PC-9 (cell line): ENCODE measurements at regions of chr6 and their contacts with region 1.

Region 1: GRCh38 chr6:83480470-83480869 is 31.9 kb upstream of the PRSS35 start:
- DNase-seq: no peak
- H3K4me3 ChIP-seq: no peak overlapping the region
- H3K27ac ChIP-seq: no peak overlapping the region
- H3K4me1 ChIP-seq: no peaks in the 10 kb centered on the region
- H3K27me3 ChIP-seq: no peaks in the 10 kb centered on the region
- CTCF ChIP-seq: no peak

Region 2: DNA sequence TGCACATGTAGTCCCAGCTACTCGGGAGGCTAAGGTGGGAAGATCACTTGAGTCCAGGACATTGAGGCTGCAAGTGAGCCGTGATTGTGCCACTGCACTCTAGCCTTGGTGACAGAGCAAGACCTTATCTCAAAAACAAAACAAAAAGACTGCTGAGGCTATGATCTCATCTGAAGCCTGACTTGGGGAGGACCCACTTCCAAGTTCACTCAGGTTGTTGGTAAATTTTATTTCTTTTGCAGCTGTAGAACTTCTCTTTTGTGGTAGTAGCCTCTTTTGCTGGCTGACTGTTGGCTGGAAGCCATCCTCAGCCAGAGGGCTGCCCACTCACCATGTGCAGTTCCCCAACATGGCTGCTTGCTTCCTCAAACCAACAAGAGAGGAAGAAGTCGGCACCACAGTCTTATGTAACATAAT is 12.8 kb before region 1 on chr6:
- CTCF ChIA-PET with region 1: no interaction called
- POLR2A ChIA-PET with region 1: interaction called, 10 read pairs
- intact Hi-C with region 1: no loop called
- DNase-seq: no peak
- H3K4me3 ChIP-seq: no peak overlapping the region
- H3K27ac ChIP-seq: no peak overlapping the region
- H3K4me1 ChIP-seq: no peaks in the 10 kb centered on the region
- H3K27me3 ChIP-seq: no peaks in the 10 kb centered on the region
- CTCF ChIP-seq: no peak

Region 3: DNA sequence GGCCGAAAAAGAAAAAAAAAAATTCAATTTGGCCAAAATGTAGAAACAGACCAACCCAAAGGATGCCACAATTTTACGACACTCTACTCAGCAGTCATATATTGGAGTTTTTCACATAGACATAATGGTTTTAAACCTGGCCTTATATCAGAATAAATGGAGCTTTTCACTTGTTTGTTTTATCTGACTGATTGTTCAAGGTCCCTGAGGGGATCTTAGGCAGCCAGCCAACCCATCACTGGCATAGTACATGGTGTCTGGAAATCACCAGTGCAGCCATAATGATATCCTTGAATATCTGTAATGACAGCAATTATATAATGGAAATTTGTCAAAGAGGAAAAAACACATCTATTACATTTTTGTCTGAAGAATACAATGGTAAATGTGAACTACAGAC is 128.8 kb after region 1 on chr6:
- CTCF ChIA-PET with region 1: no interaction called
- POLR2A ChIA-PET with region 1: no interaction called
- intact Hi-C with region 1: no loop called
- DNase-seq: no peak
- H3K4me3 ChIP-seq: no peak overlapping the region
- H3K27ac ChIP-seq: no peak overlapping the region
- H3K4me1 ChIP-seq: no peaks in the 10 kb centered on the region
- H3K27me3 ChIP-seq: no peaks in the 10 kb centered on the region
- CTCF ChIP-seq: no peak